Naive thymus-derived CD4-positive, alpha-beta T cell (primary cell): ENCODE measurements at regions of chr5 and their contacts with region 1.

Region 1: GRCh38 chr5:1385395-1386273 is 40.7 kb upstream of the CLPTM1L start:
- DNase-seq: peak; percentile 67 to 89 (median 78)
- ATAC-seq: peak; percentile 91
- H3K4me3 ChIP-seq: peak overlapping the region; percentile 94
- H3K4me3 Mint-ChIP-seq: peak overlapping the region; percentile 90 to 100 (median 98)
- H3K27ac ChIP-seq: peak overlapping the region; percentile 98
- H3K27ac Mint-ChIP-seq: peak overlapping the region; percentile 98 to 100 (median 99)
- H3K4me1 ChIP-seq: peaks cover 13 to 24% of the 10 kb centered on the region in 2 donors
- H3K4me1 Mint-ChIP-seq: peaks cover 17 to 44% (median 26%) of the 10 kb centered on the region in 7 donors
- H3K27me3 ChIP-seq: no peaks in the 10 kb centered on the region
- H3K27me3 Mint-ChIP-seq: peaks cover 0 to 17% (median 0%) of the 10 kb centered on the region in 5 donors

Region 2: DNA sequence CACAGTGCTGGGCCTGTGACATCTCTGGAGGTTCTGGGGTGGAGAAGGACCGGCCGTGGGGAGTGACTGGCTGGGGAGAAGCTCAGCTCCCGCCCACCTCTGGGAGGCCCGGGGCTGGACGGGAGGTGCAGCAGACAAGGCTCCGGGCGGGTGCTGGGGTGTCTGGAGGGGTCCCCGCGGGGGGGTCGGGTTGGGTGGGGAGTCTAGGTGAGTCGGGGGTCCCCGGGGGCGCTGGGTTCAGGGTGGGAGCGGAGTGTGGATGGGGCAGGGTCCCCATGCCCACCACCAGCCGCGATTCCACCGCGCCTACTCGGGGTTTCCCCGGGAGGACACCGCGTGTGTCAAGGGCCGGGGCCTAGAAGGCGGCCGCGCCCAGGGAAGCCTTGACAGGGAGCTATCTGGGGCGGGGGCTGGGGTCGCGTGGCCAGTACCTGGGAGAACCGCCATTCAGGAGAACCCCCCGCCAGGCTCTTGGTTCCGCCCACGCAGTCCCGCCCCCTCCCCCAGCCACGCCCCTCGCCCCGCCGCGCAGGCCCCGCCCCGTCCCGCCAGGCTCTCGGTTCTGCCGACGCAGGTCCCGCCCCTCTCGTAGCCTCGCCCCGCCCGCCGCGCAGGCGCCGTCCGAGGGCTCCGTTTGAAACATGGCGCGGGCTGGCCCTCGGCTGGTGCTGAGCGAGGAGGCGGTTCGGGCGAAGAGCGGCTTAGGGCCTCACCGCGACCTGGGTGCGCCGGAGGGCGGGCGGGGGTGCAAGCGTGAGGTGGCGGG is 773.7 kb before region 1 on chr5 and contains the start of gene CEP72:
- CTCF ChIA-PET with region 1: no interaction called
- POLR2A ChIA-PET with region 1: no interaction called
- intact Hi-C with region 1: loop called (anchors 5 to 10 kb)
- DNase-seq: peak; percentile 81 to 96 (median 88)
- ATAC-seq: peak; percentile 98
- H3K4me3 ChIP-seq: peak within 1 kb of the TSS; percentile 59
- H3K4me3 Mint-ChIP-seq: peak within 1 kb of the TSS; percentile 84 to 99 (median 95)
- H3K27ac ChIP-seq: peak within 1 kb of the TSS; percentile 75
- H3K27ac Mint-ChIP-seq: peak within 1 kb of the TSS; percentile 76 to 96 (median 85)
- H3K4me1 ChIP-seq: peaks cover 5 to 7% of the 10 kb centered on the region in 2 donors
- H3K4me1 Mint-ChIP-seq: peaks cover 36 to 60% (median 56%) of the 10 kb centered on the region in 7 donors
- H3K27me3 ChIP-seq: no peaks in the 10 kb centered on the region
- H3K27me3 Mint-ChIP-seq: peaks cover 0 to 14% (median 8%) of the 10 kb centered on the region in 5 donors
- total RNA-seq, gene CEP72: 13.4 to 33.8 (median 22.7) TPM

Region 3: GRCh38 chr5:1167728-1168709 is 217.6 kb before region 1 on chr5:
- CTCF ChIA-PET with region 1: interaction called, 3 read pairs
- POLR2A ChIA-PET with region 1: interaction called, 7 read pairs
- intact Hi-C with region 1: loop called (anchors 2 to 10 kb)
- DNase-seq: peak; percentile 51 to 79 (median 71)
- ATAC-seq: peak; percentile 81
- H3K4me3 ChIP-seq: no peak overlapping the region
- H3K4me3 Mint-ChIP-seq: peak overlapping the region; percentile 58 to 85 (median 79)
- H3K27ac ChIP-seq: no peak overlapping the region
- H3K27ac Mint-ChIP-seq: no peak overlapping the region
- H3K4me1 ChIP-seq: no peaks in the 10 kb centered on the region
- H3K4me1 Mint-ChIP-seq: peaks cover 6 to 18% (median 12%) of the 10 kb centered on the region in 7 donors
- H3K27me3 ChIP-seq: no peaks in the 10 kb centered on the region
- H3K27me3 Mint-ChIP-seq: peaks cover 2 to 22% (median 11%) of the 10 kb centered on the region in 5 donors

Region 4: DNA sequence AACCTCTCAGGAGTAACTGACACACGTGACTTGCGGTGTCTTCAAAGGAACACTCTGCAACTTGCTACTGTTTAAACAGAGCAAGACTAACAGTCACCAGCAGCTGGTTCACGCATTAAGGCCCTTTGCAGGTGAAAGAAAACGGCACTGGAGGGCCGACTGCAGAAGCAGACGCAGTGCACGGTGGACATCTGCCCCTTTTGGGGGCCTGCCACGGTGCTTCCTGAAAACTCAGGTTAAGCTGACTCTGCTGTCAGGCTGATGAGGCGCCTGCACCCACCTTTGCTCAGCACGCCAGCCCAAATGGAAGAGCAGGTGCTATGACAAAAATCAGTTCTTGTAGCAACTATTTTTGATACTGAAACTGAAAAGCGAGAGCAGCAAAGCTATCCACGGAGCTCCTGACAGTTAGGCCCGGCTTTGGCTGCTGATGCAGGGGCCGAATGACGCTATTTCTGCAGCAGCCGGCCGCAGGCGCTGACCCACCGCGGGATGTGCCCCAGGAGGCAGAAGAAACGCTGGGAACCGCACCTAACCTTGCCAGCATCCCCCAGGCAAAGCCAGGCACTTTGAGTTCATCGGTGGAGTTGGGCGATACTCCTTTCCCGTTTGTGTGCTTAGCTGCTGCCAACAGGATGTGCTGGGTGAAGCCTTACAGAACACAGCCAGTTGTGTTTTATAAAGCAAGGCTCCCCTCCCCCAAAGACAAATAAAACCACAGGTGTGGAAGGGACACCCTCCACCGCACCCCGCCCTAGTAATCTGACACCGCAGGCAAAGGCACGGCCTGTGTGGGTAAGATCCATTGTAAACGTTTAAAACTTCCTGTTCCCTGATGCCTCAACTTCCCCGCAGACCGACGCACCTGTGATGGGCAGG is 69.7 kb before region 1 on chr5:
- CTCF ChIA-PET with region 1: interaction called, 3 read pairs
- POLR2A ChIA-PET with region 1: interaction called, 40 read pairs
- intact Hi-C with region 1: loop called in 1 of 2 experiments (anchors 1 kb)
- DNase-seq: peak in 8 of 9 donors; percentile 47 to 88 (median 82)
- ATAC-seq: peak; percentile 79
- H3K4me3 ChIP-seq: peak overlapping the region; percentile 51
- H3K4me3 Mint-ChIP-seq: peak overlapping the region; percentile 81 to 92 (median 86)
- H3K27ac ChIP-seq: peak overlapping the region; percentile 66
- H3K27ac Mint-ChIP-seq: peak overlapping the region; percentile 94 to 96 (median 95)
- H3K4me1 ChIP-seq: peaks cover 39 to 55% of the 10 kb centered on the region in 2 donors
- H3K4me1 Mint-ChIP-seq: peaks cover 36 to 70% (median 59%) of the 10 kb centered on the region in 7 donors
- H3K27me3 ChIP-seq: no peaks in the 10 kb centered on the region
- H3K27me3 Mint-ChIP-seq: peaks cover 0 to 2% (median 0%) of the 10 kb centered on the region in 5 donors

Region 5: DNA sequence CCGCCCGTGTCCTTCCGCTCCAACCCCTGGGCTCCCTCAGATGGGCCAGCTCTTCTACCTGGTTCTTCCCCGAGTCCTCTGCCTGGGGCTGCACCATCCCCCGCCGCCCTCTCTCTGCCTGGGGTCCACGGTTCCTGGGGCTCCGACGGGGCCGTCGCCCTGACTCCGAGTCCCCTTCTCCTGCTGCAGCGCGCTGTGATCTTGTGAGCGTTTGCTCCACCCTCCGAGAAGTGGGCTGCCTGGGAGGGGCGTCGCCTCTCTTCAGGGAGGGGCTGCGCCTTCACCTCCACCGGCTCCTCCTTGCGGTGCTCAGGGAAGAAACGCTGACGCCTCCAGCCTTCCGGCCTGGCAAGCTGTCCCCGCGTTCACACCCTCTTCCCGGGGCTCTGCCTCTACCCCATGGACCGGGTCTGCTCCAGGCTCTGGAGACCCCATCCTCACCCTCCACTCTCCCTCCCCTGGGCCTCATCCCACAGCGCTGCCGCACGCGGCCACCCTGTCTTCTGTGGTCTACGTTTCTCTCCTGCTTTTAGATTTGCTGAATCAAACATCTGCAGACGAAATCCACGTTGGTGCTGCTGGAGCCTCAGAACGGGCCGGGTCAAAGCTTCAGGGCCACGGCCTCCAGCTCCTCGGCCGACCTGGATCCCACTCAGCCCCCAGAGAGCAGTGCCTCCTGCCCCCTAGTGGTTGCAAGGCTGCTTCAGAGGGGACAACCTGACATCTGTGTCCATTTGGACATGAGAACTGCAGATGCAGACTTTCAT is 82.3 kb after region 1 on chr5:
- CTCF ChIA-PET with region 1: no interaction called
- POLR2A ChIA-PET with region 1: no interaction called
- intact Hi-C with region 1: loop called in 1 of 2 experiments (anchors 1 kb)
- DNase-seq: peak in 5 of 9 donors; percentile 17 to 36 (median 23)
- ATAC-seq: no peak
- H3K4me3 ChIP-seq: no peak overlapping the region
- H3K4me3 Mint-ChIP-seq: no peak overlapping the region
- H3K27ac ChIP-seq: no peak overlapping the region
- H3K27ac Mint-ChIP-seq: peak overlapping the region in 3 of 9 donors; percentile 20 to 59 (median 58)
- H3K4me1 ChIP-seq: no peaks in the 10 kb centered on the region
- H3K4me1 Mint-ChIP-seq: peaks cover 0 to 9% (median 0%) of the 10 kb centered on the region in 7 donors
- H3K27me3 ChIP-seq: no peaks in the 10 kb centered on the region
- H3K27me3 Mint-ChIP-seq: no peaks in the 10 kb centered on the region

Region 6: DNA sequence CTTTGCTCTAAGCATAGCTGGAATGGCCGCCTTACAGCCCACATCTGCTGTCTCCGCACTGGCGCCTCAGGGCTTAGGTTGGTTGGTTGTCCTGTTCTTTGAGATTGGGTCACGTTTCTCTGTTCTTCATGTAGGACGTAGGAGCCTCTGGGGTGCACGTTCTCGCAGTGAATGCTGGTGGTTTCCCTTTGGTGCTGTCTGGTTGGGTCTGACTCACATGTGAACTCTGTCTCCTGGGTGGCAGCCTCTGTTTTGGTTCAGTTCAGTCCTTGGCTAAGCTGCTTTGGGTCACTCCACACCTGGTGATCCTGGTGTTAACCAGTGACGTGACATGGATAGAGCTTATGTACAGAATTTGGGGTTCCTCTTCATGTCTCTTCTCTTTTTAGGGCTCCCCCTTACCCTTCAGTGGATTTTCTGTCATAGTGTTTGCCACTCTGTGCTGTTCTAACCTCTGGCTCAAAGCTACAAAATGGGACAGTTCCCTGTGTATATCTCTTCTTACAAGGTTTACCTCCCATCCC is 150.8 kb after region 1 on chr5:
- CTCF ChIA-PET with region 1: no interaction called
- POLR2A ChIA-PET with region 1: interaction called, 7 read pairs
- intact Hi-C with region 1: loop called in 1 of 2 experiments (anchors 2 kb)
- DNase-seq: peak; percentile 25 to 72 (median 61)
- ATAC-seq: peak; percentile 97
- H3K4me3 ChIP-seq: peak overlapping the region; percentile 59
- H3K4me3 Mint-ChIP-seq: peak overlapping the region; percentile 71 to 90 (median 82)
- H3K27ac ChIP-seq: peak overlapping the region; percentile 75
- H3K27ac Mint-ChIP-seq: peak overlapping the region; percentile 81 to 94 (median 91)
- H3K4me1 ChIP-seq: peaks cover 11 to 22% of the 10 kb centered on the region in 2 donors
- H3K4me1 Mint-ChIP-seq: peaks cover 19 to 37% (median 30%) of the 10 kb centered on the region in 7 donors
- H3K27me3 ChIP-seq: no peaks in the 10 kb centered on the region
- H3K27me3 Mint-ChIP-seq: peaks cover 0 to 39% (median 0%) of the 10 kb centered on the region in 5 donors